GM12878 (cell line): ENCODE measurements at regions of chr1 and their contacts with region 1.

Region 1: GRCh38 chr1:221979461-221980032 is 237.7 kb upstream of the DUSP10 start:
- DNase-seq: no peak
- ATAC-seq: peak; percentile 48
- H3K4me3 ChIP-seq: no peak overlapping the region
- H3K27ac ChIP-seq: no peak overlapping the region
- H3K4me1 ChIP-seq: no peaks in the 10 kb centered on the region
- H3K27me3 ChIP-seq: no peaks in the 10 kb centered on the region
- CTCF ChIP-seq: no peak; a peak in 1 of 6 replicates
- EP300 ChIP-seq: no peak
- POLR2A ChIP-seq: no peak
- RAD21 ChIP-seq: peak; percentile 49

Region 2: DNA sequence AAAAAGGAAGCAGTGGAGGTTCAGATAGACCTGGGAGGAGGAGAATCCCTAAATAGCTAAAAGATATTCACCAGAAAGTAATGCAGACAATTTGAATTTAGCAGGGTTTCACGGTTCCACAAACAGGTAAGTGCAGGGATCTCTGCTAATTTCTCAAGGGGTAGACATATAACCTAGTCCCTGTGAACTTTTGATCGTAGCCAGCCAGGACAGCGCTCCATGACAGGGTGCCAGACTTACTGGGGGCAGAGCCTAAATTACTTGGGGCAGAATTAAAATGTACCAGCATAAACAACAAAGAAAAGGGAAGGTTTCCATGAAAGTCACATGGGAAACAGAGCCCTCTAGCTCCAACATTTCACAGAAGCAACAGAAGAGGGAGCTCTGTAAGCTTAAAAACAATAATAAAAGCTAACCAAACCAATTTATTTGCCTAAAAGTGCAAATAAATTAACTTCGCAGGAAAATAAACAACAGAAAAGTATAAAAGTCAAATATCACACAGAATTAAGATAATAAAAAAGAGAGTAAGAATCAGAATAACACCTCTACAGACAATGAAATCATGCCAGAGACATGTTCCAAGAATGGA is 435.9 kb before region 1 on chr1:
- CTCF ChIA-PET with region 1: interaction called, 10 read pairs
- POLR2A ChIA-PET with region 1: no interaction called
- RAD21 ChIA-PET with region 1: interaction called, 8 read pairs
- SMC1A ChIA-PET with region 1: interaction called, 4 read pairs
- in situ Hi-C with region 1: no loop called
- intact Hi-C with region 1: no loop called
- DNase-seq: no peak
- ATAC-seq: peak; percentile 64
- H3K4me3 ChIP-seq: no peak overlapping the region
- H3K27ac ChIP-seq: no peak overlapping the region
- H3K4me1 ChIP-seq: no peaks in the 10 kb centered on the region
- H3K27me3 ChIP-seq: no peaks in the 10 kb centered on the region
- CTCF ChIP-seq: peak; percentile 39 to 57 (median 53); a peak in 5 of 6 replicates
- EP300 ChIP-seq: no peak
- POLR2A ChIP-seq: no peak
- RAD21 ChIP-seq: peak; percentile 66

Region 3: GRCh38 chr1:222081859-222082258 is 102.3 kb after region 1 on chr1:
- CTCF ChIA-PET with region 1: no interaction called
- POLR2A ChIA-PET with region 1: no interaction called
- RAD21 ChIA-PET with region 1: no interaction called
- SMC1A ChIA-PET with region 1: no interaction called
- in situ Hi-C with region 1: no loop called
- intact Hi-C with region 1: no loop called
- DNase-seq: no peak
- ATAC-seq: peak; percentile 38
- H3K4me3 ChIP-seq: no peak overlapping the region
- H3K27ac ChIP-seq: no peak overlapping the region
- H3K4me1 ChIP-seq: no peaks in the 10 kb centered on the region
- H3K27me3 ChIP-seq: no peaks in the 10 kb centered on the region
- CTCF ChIP-seq: no peak
- EP300 ChIP-seq: no peak
- POLR2A ChIP-seq: no peak
- RAD21 ChIP-seq: no peak

Region 4: GRCh38 chr1:222161676-222162075 is 182.1 kb after region 1 on chr1:
- CTCF ChIA-PET with region 1: no interaction called
- POLR2A ChIA-PET with region 1: no interaction called
- RAD21 ChIA-PET with region 1: no interaction called
- SMC1A ChIA-PET with region 1: no interaction called
- in situ Hi-C with region 1: no loop called
- intact Hi-C with region 1: no loop called
- DNase-seq: no peak
- ATAC-seq: peak; percentile 21; the same call in 2 of the 3 replicates
- H3K4me3 ChIP-seq: no peak overlapping the region
- H3K27ac ChIP-seq: no peak overlapping the region
- H3K4me1 ChIP-seq: no peaks in the 10 kb centered on the region
- H3K27me3 ChIP-seq: no peaks in the 10 kb centered on the region
- CTCF ChIP-seq: no peak
- EP300 ChIP-seq: no peak
- POLR2A ChIP-seq: no peak
- RAD21 ChIP-seq: no peak